ENCODE measurements at regions of chr7 and their contacts with region 1.

Region 1: DNA sequence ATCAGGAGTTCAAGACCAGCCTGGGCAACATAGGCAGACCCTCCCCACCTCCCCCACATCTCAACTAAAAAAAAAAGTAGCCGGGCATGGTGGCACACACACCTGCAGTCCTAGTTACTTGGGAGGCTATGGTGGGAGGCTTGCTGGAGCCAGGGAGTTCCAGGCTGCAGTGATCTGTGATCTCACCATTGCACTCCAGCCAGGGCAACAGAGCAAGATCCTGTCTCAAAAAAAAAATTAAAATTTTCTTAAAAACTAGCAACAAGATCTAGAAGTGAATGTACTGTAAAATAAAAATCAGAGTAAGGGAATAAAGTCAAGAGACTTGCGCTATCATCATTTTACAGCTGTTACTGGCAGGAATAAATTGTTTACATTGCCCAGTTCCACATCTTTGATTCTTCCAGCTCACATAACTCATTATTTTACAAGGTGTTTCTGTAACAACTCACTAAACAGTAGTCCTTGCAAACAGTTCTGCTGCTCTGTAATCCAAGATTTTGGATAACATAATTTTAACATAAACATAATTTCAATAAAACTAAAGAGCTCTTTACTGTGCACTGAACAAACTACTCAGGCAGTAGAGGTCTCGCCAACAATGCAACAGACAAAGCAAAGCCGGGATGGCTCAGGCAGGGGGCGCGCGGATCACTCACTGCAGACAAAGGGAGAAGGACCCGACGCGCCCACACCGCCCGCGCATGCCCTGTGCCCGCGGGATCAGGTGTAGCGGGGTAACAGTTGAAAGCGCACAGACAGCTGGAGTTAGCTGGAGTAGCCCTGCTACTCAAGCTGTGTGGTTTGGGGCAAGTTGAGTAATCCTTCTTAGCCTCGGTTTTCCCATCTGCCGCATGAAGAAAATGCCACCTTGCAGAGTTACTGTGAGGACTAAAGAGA is 73.3 kb upstream of the NFE2L3 start:
- DNase-seq: peak; percentile 64 to 86 (median 68)
- H3K4me3 ChIP-seq: no peak overlapping the region
- H3K4me3 Mint-ChIP-seq: peak overlapping the region in 3 of 7 donors; percentile 49 to 52 (median 49)
- H3K27ac ChIP-seq: no peak overlapping the region
- H3K27ac Mint-ChIP-seq: no peak overlapping the region
- H3K4me1 ChIP-seq: peaks cover 7% of the 10 kb centered on the region
- H3K4me1 Mint-ChIP-seq: peaks cover 7 to 8% (median 8%) of the 10 kb centered on the region in 3 donors
- H3K27me3 ChIP-seq: no peaks in the 10 kb centered on the region
- H3K27me3 Mint-ChIP-seq: peaks cover 32 to 68% of the 10 kb centered on the region in 2 donors

Region 2: GRCh38 chr7:25894902-25895791 is 183.5 kb before region 1 on chr7:
- CTCF ChIA-PET with region 1: interaction called, 16 read pairs
- POLR2A ChIA-PET with region 1: no interaction called
- DNase-seq: peak; percentile 37 to 69 (median 50)
- H3K4me3 ChIP-seq: peak overlapping the region; percentile 30
- H3K4me3 Mint-ChIP-seq: peak overlapping the region in 6 of 7 donors; percentile 60 to 80 (median 64)
- H3K27ac ChIP-seq: no peak overlapping the region
- H3K27ac Mint-ChIP-seq: peak overlapping the region in 1 of 8 donors; percentile 9
- H3K4me1 ChIP-seq: peaks cover 15% of the 10 kb centered on the region
- H3K4me1 Mint-ChIP-seq: peaks cover 24 to 35% (median 34%) of the 10 kb centered on the region in 3 donors
- H3K27me3 ChIP-seq: no peaks in the 10 kb centered on the region
- H3K27me3 Mint-ChIP-seq: peaks cover under 1 to 8% of the 10 kb centered on the region in 2 donors

Region 3: GRCh38 chr7:26090927-26091519 is 12.3 kb after region 1 on chr7:
- CTCF ChIA-PET with region 1: interaction called, 52 read pairs
- POLR2A ChIA-PET with region 1: no interaction called
- DNase-seq: peak in 2 of 5 donors; percentile 27 to 49
- H3K4me3 ChIP-seq: no peak overlapping the region
- H3K4me3 Mint-ChIP-seq: peak overlapping the region in 1 of 7 donors; percentile 0
- H3K27ac ChIP-seq: no peak overlapping the region
- H3K27ac Mint-ChIP-seq: no peak overlapping the region
- H3K4me1 ChIP-seq: no peaks in the 10 kb centered on the region
- H3K4me1 Mint-ChIP-seq: peaks cover 8 to 18% (median 17%) of the 10 kb centered on the region in 3 donors
- H3K27me3 ChIP-seq: no peaks in the 10 kb centered on the region
- H3K27me3 Mint-ChIP-seq: peaks cover 0 to 2% of the 10 kb centered on the region in 2 donors

Region 4: DNA sequence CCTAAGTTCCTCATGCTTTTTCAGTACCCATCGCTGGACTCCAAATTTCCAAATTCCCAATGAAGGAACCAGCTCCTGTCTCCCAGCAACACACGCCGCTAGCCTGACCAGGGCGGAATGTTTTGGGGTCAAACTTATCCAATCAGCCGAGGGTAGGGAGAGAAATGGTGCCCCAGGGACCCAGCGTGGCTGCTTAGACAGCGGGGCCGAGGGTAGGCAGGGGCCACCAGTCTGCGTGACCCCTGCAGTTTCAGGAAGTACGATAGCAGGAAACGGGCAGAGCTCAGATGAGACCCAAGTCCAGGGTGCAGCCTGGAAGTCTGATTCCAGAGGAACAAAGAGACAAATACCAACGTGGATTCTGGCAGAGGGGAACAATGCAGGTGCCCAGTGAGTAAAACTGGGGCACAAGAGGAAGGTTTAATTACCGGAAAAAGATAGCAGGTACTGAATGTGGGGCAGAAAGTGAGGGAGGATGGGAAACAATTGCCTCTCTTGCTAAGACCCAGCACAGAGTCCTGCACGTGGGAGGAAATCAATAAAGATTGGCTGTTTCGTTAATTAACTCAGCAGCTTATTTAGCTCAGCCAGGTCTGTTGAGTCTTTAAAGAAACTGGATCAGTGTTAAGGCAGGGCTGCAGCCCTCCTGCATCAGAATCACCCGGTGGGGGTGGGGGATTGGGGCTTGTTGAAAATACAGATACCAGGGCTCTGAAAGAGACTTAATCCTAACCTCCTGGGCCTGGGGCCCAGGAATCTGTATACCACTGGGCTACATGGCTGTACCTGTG is 22.9 kb after region 1 on chr7:
- CTCF ChIA-PET with region 1: no interaction called
- POLR2A ChIA-PET with region 1: no interaction called
- DNase-seq: no peak
- H3K4me3 ChIP-seq: no peak overlapping the region
- H3K4me3 Mint-ChIP-seq: peak overlapping the region in 5 of 7 donors; percentile 12 to 61 (median 58)
- H3K27ac ChIP-seq: no peak overlapping the region
- H3K27ac Mint-ChIP-seq: peak overlapping the region in 2 of 8 donors; percentile 43 to 61
- H3K4me1 ChIP-seq: peaks cover 29% of the 10 kb centered on the region
- H3K4me1 Mint-ChIP-seq: peaks cover 16 to 32% (median 26%) of the 10 kb centered on the region in 3 donors
- H3K27me3 ChIP-seq: no peaks in the 10 kb centered on the region
- H3K27me3 Mint-ChIP-seq: peaks cover 0 to 5% of the 10 kb centered on the region in 2 donors

Region 5: DNA sequence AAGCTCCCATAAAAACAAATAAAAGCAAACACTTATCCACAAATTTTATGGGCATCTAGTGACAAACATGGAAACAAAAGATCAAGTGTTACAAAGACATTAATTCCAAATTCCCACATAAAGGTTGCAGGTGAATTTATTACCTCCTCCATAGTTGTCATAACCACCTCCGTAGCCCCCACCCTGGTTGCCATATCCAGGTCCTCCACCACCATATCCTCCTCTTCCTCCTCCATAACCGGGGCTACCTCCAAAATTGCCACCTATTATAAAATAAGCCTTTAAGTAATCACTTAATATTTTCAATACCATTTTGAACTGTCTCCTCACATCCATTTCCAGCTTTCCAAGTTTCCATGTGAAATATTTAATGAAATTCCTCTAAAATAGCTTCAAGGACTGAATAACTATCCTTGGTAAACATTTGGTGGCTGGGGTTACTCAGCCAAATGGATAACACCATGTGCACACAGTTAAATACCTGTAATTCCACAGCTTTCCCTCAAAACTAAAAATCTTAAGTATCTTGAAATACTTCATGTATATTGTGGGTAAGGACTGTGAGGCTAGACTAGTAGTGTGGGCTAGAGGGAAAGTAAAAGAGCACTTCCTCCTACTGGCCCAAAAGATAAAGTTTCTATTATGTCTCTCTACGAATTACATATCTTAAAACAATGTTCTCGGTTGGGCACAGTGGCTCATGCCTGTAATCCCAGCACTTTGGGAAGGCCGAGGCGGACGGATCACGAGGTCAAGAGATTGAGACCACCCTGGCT is 114.9 kb after region 1 on chr7:
- CTCF ChIA-PET with region 1: interaction called, 33 read pairs
- POLR2A ChIA-PET with region 1: interaction called, 3 read pairs
- DNase-seq: no peak
- H3K4me3 ChIP-seq: no peak overlapping the region
- H3K4me3 Mint-ChIP-seq: peak overlapping the region; percentile 70 to 99 (median 86)
- H3K27ac ChIP-seq: no peak overlapping the region
- H3K27ac Mint-ChIP-seq: peak overlapping the region; percentile 87 to 96 (median 92)
- H3K4me1 ChIP-seq: peaks cover 73% of the 10 kb centered on the region
- H3K4me1 Mint-ChIP-seq: peaks cover 86 to 95% (median 94%) of the 10 kb centered on the region in 3 donors
- H3K27me3 ChIP-seq: no peaks in the 10 kb centered on the region
- H3K27me3 Mint-ChIP-seq: peaks cover 0 to 1% of the 10 kb centered on the region in 2 donors

Region 6: DNA sequence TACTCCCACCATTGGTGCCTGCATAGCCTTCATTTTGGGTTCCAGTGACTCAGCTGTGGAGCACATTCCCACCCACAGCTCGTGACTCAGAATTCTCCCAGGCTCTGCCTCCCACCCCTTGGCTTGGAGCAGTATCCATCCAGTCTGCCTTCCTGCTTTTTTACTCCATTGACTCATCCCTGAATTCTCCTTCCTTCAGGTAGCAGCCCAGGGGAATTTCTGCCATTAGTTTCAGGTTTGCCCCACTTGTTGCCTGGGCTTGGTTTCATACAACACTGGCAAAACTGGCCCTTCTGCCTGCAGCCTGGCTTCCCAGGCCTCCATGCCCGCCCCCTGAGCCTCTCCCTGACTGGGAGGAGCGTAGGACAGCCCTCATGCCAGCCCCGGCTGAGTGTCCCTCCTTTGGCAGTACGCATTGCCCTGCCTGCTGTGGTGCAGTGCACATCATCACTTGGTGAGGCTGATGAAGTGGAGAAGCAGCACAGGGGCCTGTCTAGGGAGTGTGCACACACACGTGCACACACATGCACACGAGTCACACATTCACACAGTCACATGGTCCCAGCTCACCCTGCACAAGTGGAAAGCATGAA is 268.0 kb after region 1 on chr7:
- CTCF ChIA-PET with region 1: interaction called, 10 read pairs
- POLR2A ChIA-PET with region 1: no interaction called
- DNase-seq: no peak
- H3K4me3 ChIP-seq: no peak overlapping the region
- H3K4me3 Mint-ChIP-seq: no peak overlapping the region
- H3K27ac ChIP-seq: no peak overlapping the region
- H3K27ac Mint-ChIP-seq: peak overlapping the region in 1 of 8 donors; percentile 42
- H3K4me1 ChIP-seq: no peaks in the 10 kb centered on the region
- H3K4me1 Mint-ChIP-seq: peaks cover 2 to 7% (median 4%) of the 10 kb centered on the region in 3 donors
- H3K27me3 ChIP-seq: no peaks in the 10 kb centered on the region
- H3K27me3 Mint-ChIP-seq: no peaks in the 10 kb centered on the region

Region 7: DNA sequence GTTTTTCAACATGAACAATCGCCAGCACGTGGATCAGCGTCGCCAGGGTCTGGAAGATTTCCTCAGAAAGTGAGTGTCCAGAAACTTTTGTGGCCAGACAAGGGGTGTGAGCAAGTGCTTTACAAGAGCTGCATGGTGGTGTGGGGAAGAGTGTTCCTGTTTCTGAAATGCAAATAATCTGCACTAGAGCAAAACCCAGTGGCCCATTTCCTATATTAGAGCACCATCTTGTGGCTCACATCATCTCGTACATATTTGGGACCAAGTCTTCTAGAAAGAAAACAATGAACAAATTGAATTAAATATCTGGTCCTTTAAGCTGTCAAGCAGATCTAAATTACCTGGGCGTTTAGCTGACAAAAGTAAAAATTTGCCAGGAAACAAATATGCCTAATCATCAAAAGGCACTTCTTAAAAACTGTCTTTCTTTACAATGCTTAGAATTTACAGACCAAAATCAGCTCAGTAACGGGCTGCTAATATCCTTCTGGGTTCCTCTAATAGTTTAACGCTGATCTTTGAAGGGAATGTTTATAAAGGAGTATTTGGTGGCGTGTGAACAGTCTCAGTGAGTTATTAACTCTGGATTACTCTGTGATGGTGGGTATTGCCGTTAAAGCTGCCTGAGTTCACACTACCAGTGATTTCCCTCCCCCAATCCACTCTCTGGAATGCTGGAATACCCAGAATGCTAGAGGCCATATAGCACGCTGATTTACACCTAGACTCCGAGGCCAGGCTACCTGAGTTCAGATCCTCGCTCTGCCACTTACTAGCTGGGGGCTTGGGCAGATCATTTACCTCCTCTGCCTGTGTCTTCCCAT is 286.6 kb after region 1 on chr7:
- CTCF ChIA-PET with region 1: interaction called, 18 read pairs
- POLR2A ChIA-PET with region 1: no interaction called
- DNase-seq: peak in 4 of 5 donors; percentile 12 to 62 (median 58)
- H3K4me3 ChIP-seq: no peak overlapping the region
- H3K4me3 Mint-ChIP-seq: no peak overlapping the region
- H3K27ac ChIP-seq: no peak overlapping the region
- H3K27ac Mint-ChIP-seq: peak overlapping the region in 3 of 8 donors; percentile 52 to 92 (median 79)
- H3K4me1 ChIP-seq: peaks cover 7% of the 10 kb centered on the region
- H3K4me1 Mint-ChIP-seq: peaks cover 7 to 12% (median 8%) of the 10 kb centered on the region in 3 donors
- H3K27me3 ChIP-seq: no peaks in the 10 kb centered on the region
- H3K27me3 Mint-ChIP-seq: no peaks in the 10 kb centered on the region